ENCODE measurements at regions of chr1 and their contacts with region 1.

Region 1: DNA sequence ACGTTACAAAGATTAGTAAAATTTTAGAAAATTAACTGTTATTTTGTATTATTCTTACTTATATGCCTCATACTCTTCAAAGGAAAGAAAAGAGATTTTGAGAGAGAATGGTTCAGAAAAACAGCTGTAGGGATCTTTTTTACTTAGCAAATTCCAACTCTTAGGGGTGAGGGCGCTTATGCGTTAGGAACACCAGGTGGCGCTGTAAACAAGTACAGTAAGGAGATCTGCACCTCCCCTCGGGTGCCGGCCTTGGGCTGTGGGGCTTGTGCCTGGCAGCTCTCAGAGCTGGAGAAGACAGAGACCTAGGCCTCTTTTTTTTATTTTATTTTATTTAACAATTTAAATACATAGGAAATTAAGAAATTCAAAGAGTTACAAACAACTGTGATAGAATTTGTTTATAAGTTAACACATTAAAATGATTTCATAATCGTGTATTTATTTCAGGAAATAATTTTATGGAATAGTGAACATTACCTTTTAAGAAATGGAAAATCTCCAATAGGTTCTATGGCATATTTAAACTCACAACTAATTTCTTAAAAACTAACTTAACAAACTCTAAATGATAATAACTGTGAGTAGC is 32.6 kb downstream of the UTP25 start:
- DNase-seq: no peak
- H3K4me3 ChIP-seq: no peak overlapping the region
- H3K27me3 ChIP-seq: peaks cover 3% of the 10 kb centered on the region
- CTCF ChIP-seq: peak; percentile 89

Region 2: GRCh38 chr1:209839875-209840491 is 20.4 kb before region 1 on chr1:
- CTCF ChIA-PET with region 1: interaction called, 60 read pairs
- POLR2A ChIA-PET with region 1: no interaction called
- DNase-seq: peak; percentile 70
- H3K4me3 ChIP-seq: no peak overlapping the region
- H3K27me3 ChIP-seq: no peaks in the 10 kb centered on the region
- CTCF ChIP-seq: no peak

Region 3: GRCh38 chr1:209875515-209875914 is 15.1 kb after region 1 on chr1:
- CTCF ChIA-PET with region 1: interaction called, 21 read pairs
- POLR2A ChIA-PET with region 1: no interaction called
- DNase-seq: no peak
- H3K4me3 ChIP-seq: no peak overlapping the region
- H3K27me3 ChIP-seq: no peaks in the 10 kb centered on the region
- CTCF ChIP-seq: peak; percentile 69